Panc1 (cell line): ENCODE measurements at regions of chr20 and their contacts with region 1.

Region 1: GRCh38 chr20:5745416-5746030 is 4.7 kb upstream of the SHLD1 start:
- DNase-seq: no peak
- ATAC-seq: no peak
- H3K4me3 ChIP-seq: no peak overlapping the region
- H3K27ac ChIP-seq: no peak overlapping the region
- H3K4me1 ChIP-seq: no peaks in the 10 kb centered on the region
- H3K27me3 ChIP-seq: no peaks in the 10 kb centered on the region
- CTCF ChIP-seq: no peak

Region 2: DNA sequence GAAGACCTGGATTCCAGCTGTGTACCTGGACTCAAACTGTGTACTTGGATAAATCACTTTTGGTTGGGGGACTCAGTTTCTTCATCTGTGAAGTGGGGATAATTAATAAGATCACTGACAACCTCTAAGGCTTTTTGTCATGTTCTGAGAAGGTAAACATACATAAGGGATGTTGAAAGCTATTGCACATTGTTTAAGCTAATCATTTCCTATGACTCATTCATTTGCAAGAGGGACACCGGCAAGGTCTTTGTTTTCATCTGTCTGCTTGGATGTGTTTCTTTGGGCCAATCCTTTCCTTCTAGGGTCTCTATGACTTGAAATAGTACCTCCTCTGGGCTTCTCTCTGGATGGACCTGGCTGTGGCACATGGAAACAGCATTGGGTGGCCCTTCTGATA is 435.6 kb before region 1 on chr20:
- CTCF ChIA-PET with region 1: no interaction called
- POLR2A ChIA-PET with region 1: no interaction called
- in situ Hi-C with region 1: no loop called
- intact Hi-C with region 1: no loop called
- DNase-seq: no peak
- ATAC-seq: no peak
- H3K4me3 ChIP-seq: no peak overlapping the region
- H3K27ac ChIP-seq: no peak overlapping the region
- H3K4me1 ChIP-seq: no peaks in the 10 kb centered on the region
- H3K27me3 ChIP-seq: peaks cover 7% of the 10 kb centered on the region
- CTCF ChIP-seq: no peak

Region 3: GRCh38 chr20:5638023-5638422 is 107.5 kb before region 1 on chr20:
- CTCF ChIA-PET with region 1: no interaction called
- POLR2A ChIA-PET with region 1: interaction called, 10 read pairs
- in situ Hi-C with region 1: no loop called
- intact Hi-C with region 1: no loop called
- DNase-seq: no peak
- ATAC-seq: no peak
- H3K4me3 ChIP-seq: no peak overlapping the region
- H3K27ac ChIP-seq: no peak overlapping the region
- H3K4me1 ChIP-seq: peaks cover 8% of the 10 kb centered on the region; the same call in 1 of the 2 replicates
- H3K27me3 ChIP-seq: no peaks in the 10 kb centered on the region
- CTCF ChIP-seq: no peak